ENCODE measurements at regions of chr6 and their contacts with region 1.

Region 1: DNA sequence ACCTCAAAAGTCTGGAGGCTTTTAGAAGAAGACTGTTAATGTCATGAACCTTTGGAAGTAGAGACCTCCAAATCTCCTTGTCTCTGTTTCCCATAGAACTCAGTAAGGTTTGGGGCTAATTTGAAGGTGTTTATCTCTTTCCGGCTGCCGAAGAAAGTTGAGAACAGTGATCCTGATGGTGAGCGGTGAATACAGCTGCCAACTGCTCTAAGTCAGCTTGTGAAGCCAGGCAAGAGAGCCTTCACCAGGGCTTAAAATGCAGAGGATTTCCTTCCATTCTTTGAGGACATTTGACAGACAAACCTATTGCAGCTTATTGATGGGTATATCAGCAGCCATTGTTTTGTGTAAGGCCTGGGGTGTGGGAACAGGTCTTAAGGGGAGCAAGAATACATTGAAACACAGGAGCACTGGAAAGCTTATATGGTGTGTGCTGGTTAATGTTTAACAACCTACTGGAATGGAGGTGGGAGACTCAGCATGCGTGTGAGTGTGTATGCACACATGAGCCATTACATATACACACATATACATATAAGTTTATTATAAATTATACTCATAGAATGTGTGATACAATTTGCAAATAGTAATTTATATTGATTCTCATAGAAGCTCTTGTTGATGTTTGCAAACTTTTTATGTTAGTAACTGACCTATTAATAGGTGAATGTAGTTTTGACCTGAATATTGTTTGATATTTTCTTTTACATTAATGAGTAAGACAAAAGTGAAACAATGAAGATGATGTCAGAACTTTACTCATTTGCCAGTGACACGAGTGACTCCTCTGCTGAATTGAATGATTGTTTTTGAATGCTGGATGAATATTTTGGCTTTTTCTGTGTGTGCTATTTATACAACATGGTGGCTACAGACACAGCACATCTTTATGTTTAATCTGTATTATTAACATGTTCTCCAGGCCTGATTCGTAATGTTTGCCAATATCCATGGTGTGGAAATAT is 18.1 kb downstream of the PLEKHG1 start:
- DNase-seq: no peak
- ATAC-seq: peak; percentile 44
- H3K4me3 ChIP-seq: no peak overlapping the region
- H3K27ac ChIP-seq: no peak overlapping the region
- H3K4me1 ChIP-seq: peaks cover 6% of the 10 kb centered on the region
- H3K27me3 ChIP-seq: no peaks in the 10 kb centered on the region
- CTCF ChIP-seq: no peak
- EP300 ChIP-seq: no peak
- POLR2A ChIP-seq: no peak
- RAD21 ChIP-seq: no peak

Region 2: DNA sequence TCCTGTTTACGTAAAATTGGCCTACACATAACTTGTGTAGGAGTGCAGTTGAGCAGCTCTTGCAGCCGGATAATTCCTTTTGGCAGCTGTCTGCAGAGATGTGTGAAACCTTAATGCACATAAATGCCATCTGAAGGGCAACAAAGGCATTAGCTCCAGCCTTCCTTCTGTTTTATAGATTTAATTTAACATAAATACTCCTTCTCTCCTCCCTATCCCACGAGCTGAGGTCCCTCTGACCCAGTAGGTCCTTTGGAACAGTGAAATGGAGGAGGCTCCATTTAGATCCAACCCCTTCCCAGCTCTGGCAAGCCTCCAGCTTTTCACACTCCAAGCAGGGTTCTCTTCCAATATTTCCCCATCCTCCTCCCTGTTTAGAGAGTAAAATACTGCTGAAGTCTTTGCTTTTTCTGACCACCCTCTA is 11.6 kb before region 1 on chr6:
- CTCF ChIA-PET with region 1: interaction called, 3 read pairs
- POLR2A ChIA-PET with region 1: interaction called, 5 read pairs
- RAD21 ChIA-PET with region 1: interaction called, 5 read pairs
- SMC1A ChIA-PET with region 1: interaction called, 11 read pairs
- in situ Hi-C with region 1: no loop called
- intact Hi-C with region 1: no loop called
- DNase-seq: no peak
- ATAC-seq: no peak
- H3K4me3 ChIP-seq: no peak overlapping the region
- H3K27ac ChIP-seq: no peak overlapping the region
- H3K4me1 ChIP-seq: no peaks in the 10 kb centered on the region
- H3K27me3 ChIP-seq: peaks cover 0 to 2% of the 10 kb centered on the region in 2 experiments; a peak in 2 of 4 replicates
- CTCF ChIP-seq: no peak
- EP300 ChIP-seq: no peak
- POLR2A ChIP-seq: no peak
- RAD21 ChIP-seq: no peak

Region 3: DNA sequence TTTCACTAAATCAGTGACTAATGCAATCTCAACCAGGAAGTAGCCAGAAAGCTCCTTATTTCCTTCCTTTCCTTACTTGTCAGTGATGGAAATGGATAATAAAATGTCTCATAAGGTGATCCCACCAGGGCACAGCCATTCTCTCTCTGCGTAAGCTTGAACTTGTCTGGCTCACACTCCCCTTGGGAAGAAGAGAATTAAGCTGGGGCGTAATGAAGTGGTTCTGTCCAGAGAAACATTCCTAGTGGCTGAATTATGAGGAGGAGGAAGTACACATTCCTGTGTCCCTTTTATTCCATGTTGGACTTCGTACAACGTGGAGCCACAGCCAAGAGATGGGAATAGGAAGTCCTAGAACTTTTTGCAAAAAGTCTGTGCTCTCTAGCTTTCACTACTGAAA is 341.4 kb after region 1 on chr6:
- CTCF ChIA-PET with region 1: no interaction called
- POLR2A ChIA-PET with region 1: interaction called, 10 read pairs
- RAD21 ChIA-PET with region 1: no interaction called
- SMC1A ChIA-PET with region 1: no interaction called
- in situ Hi-C with region 1: no loop called
- intact Hi-C with region 1: no loop called
- DNase-seq: no peak
- ATAC-seq: no peak
- H3K4me3 ChIP-seq: no peak overlapping the region
- H3K27ac ChIP-seq: no peak overlapping the region
- H3K4me1 ChIP-seq: no peaks in the 10 kb centered on the region
- H3K27me3 ChIP-seq: no peaks in the 10 kb centered on the region
- CTCF ChIP-seq: no peak
- EP300 ChIP-seq: no peak
- POLR2A ChIP-seq: no peak
- RAD21 ChIP-seq: no peak

Measured in GM12878 (cell line).